ENCODE measurements at regions of chr1 and their contacts with region 1.

Region 1: DNA sequence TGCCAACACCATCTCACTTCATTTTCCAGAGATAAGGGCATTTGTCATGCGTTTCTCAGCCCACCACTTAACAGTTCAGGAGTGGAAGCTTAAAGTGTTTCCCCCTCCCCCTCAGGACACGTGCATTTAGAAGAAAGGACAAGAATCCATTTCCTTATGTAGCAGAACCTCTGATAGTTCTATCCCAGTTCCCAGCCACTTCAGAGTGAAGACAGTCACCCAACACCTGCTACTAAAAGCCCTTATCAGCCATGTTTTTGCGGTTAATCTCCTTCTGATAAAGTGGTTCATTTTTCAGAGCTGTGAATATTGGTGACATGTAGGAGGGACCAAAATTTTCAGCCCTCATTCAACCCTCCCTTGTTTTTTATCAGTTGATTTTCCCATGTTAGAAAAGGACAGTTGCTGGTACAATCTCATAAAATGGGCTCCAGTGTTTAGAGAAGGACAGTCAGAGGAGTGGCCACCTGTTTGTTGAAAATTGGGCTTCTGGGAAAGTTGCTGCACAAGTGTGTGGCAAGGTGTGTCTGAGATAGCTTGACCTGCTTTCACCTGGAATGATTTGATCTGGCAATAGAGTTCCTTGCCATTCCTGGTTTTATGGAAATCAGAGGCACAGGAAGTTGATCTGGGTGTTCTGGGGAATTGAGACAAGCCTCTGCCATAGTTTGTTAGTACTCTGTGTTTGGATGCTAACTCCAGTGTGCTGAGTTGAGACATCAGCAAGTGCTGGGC is 114.0 kb downstream of the PPP1R12B start:
- DNase-seq: no peak
- H3K4me3 ChIP-seq: no peak overlapping the region
- CTCF ChIP-seq: no peak

Region 2: GRCh38 chr1:202343652-202344349 is 118.7 kb before region 1 on chr1:
- CTCF ChIA-PET with region 1: interaction called, 17 read pairs
- POLR2A ChIA-PET with region 1: no interaction called
- DNase-seq: no peak
- H3K4me3 ChIP-seq: no peak overlapping the region
- CTCF ChIP-seq: peak; percentile 45

Region 3: GRCh38 chr1:202605515-202605914 is 143.0 kb after region 1 on chr1:
- CTCF ChIA-PET with region 1: interaction called, 48 read pairs
- POLR2A ChIA-PET with region 1: no interaction called
- DNase-seq: no peak
- H3K4me3 ChIP-seq: no peak overlapping the region
- CTCF ChIP-seq: no peak

Region 4: DNA sequence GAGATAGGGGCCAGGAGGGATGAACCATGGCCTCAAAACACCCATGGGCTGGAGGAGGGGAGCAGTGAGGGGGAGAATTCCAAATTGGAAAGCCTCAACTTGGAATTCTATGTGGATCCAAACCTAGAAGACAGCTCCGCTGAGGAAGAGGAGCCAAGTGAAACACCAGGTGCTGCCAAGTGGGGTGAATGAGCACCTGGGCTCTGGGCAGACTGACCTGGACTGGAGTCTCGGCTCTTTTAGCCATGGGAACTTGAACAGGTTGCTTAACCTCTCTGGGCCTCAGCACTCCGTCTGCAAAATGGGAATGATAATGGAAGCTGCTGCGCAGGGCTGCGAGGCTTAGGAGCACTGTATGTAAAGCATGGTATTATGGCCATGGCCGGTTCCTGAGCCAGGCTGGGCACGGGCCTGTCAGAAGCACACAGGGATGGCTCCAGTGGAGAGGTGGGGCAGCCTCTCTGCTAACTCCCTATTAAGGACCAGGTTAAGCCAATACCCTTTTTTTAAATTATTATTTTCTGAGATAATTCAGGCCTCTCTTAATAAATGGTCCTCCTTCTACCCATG is 166.2 kb after region 1 on chr1:
- CTCF ChIA-PET with region 1: interaction called, 15 read pairs
- POLR2A ChIA-PET with region 1: no interaction called
- DNase-seq: no peak
- H3K4me3 ChIP-seq: no peak overlapping the region
- CTCF ChIP-seq: no peak

Region 5: DNA sequence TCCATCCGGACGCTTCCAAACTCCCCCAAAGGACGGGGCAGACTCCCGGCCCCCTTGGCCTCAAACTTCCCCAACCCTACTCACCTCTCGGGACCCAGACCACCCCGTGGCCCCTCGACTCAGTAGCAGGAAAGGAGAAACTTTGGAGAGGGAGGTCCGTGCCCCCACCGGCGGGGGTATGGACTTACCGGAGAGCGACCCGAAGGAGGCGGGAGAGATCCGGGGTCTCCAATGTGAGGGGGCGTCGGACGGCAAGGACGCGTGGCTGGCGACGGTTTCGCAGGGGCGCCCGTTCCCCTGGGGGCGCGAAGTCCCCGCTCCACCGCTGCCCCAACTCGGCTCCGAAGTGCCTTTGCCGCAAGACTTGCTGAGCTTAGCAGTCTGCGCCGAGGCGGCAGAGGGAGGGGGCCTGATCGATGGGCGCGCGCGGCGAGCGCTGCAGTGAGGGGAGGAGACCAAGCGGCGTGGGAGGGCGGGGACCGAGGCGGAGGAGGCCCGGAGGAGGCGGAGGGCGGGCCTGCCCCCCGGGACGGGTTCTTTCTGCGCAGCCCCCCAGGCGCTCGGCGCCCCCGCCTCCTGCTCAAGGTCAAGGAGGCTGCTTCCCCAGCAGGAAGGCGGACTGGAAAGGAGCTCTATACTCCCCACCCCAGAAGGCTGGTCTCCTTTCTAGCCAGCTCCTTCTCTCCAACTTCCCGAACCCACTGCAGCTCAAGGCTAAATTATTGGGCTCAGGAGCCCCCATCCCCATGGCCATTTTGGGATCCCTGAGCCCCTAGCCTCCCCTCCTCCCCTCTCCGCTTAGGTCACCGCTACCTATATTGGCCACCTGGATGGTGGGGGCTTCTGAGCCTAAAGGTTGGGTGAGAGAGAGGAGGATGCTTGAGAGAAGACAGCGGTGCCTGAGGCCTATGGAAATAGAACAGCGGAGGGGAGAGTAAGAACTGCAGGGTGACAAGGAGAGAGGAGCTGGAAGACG is 247.8 kb after region 1 on chr1 and contains the start of gene SYT2:
- CTCF ChIA-PET with region 1: interaction called, 43 read pairs
- POLR2A ChIA-PET with region 1: no interaction called
- DNase-seq: no peak
- H3K4me3 ChIP-seq: peak within 1 kb of the TSS; percentile 32
- CTCF ChIP-seq: no peak